ENCODE measurements at regions of chr18 and their contacts with region 1.

Region 1: DNA sequence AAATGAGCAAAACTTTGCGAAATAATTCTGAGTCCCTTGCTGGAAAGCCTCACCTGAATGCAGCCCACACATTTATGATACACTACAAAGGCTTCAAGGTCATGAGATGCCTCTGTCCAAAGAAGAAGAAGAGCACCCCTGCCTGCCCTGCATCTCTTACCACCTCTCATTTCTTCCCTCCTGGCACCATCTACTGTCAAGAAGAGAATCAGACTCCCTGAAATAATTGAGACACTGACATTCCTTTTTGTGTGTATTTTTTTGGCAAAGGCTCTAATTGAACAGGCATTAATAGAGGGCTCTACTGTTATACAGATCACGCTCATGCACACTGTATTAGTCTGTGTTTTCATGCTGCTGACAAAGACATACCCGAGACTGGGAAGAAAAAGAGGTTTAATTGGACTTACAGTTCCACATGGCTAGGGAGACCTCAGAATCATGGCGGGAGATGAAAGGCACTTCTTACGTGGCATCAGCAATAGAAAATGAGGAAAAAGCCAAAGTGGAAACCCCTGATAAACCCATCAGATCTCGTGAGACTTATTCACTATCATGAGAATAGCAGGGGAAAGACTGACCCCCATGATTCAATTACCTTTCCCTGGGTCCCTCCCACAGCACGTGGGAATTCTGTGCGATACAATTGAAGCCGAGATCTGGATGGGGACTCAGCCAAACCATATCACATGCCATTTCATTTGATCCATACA is 176.3 kb downstream of the ALPK2 start:
- DNase-seq: peak; percentile 13
- H3K4me3 Mint-ChIP-seq: no peak overlapping the region
- H3K27ac Mint-ChIP-seq: no peak overlapping the region
- H3K4me1 Mint-ChIP-seq: peaks cover 12% of the 10 kb centered on the region
- H3K27me3 Mint-ChIP-seq: no peaks in the 10 kb centered on the region
- CTCF ChIP-seq: no peak

Region 2: GRCh38 chr18:58402247-58402646 is 50.4 kb before region 1 on chr18:
- CTCF ChIA-PET with region 1: no interaction called
- POLR2A ChIA-PET with region 1: no interaction called
- intact Hi-C with region 1: loop called (anchors 5 kb)
- DNase-seq: peak; percentile 43
- H3K4me3 Mint-ChIP-seq: no peak overlapping the region
- H3K27ac Mint-ChIP-seq: no peak overlapping the region
- H3K4me1 Mint-ChIP-seq: no peaks in the 10 kb centered on the region
- H3K27me3 Mint-ChIP-seq: no peaks in the 10 kb centered on the region
- CTCF ChIP-seq: no peak

Measured in MCF 10A (cell line).